T-cell (primary cell): ENCODE measurements at regions of chr13 and their contacts with region 1.

Region 1: GRCh38 chr13:78137404-78138142 is 218.9 kb upstream of the EDNRB start:
- DNase-seq: peak in 5 of 35 experiments; percentile 0 to 57 (median 7)
- ATAC-seq: peak; percentile 54 to 66 (median 62)
- H3K4me3 ChIP-seq: peak overlapping the region in 1 of 2 donors; percentile 21
- H3K4me3 Mint-ChIP-seq: peak overlapping the region; percentile 2 to 37 (median 25)
- H3K27ac ChIP-seq: no peak overlapping the region
- H3K27ac Mint-ChIP-seq: no peak overlapping the region
- H3K4me1 ChIP-seq: peaks cover 0 to 6% of the 10 kb centered on the region in 2 experiments
- H3K4me1 Mint-ChIP-seq: peaks cover 5 to 7% (median 6%) of the 10 kb centered on the region in 3 donors
- H3K27me3 ChIP-seq: no peaks in the 10 kb centered on the region
- H3K27me3 Mint-ChIP-seq: peaks cover 0 to 5% of the 10 kb centered on the region in 2 donors

Region 2: DNA sequence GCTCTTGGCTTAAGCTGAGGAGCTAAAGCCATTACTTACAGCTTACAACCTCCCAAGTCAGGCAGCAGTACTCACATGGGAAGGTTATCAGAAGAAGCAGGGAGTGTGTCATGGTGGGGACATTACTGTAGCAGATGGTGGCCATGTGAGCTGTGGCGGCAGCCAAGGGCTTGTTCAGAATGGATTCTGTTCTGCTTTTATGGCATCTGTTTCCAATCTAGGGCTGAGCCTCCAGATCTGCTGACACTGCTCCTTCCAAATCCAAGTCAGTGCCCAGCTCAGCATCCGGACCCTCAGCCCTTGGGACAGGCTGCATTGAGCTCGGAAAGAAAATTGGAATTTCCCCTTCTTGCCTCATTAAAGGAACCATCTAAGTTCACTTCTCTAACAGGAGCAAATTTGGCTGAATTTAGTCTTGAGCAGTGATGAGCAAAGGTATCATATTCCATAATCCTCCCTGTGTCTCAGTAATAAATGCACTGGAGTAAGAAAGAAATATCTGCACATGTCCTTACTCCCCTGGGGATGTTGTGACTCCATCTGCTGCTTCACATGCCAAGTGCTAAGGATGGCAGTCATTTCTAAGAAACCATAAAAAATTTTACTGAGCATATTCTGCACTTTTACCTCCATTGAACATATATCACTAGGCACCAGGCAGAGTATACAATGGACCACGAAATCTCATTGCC is 1325.2 kb before region 1 on chr13:
- CTCF ChIA-PET with region 1: no interaction called
- POLR2A ChIA-PET with region 1: no interaction called
- DNase-seq: no peak
- ATAC-seq: no peak
- H3K4me3 ChIP-seq: no peak overlapping the region
- H3K4me3 Mint-ChIP-seq: no peak overlapping the region
- H3K27ac ChIP-seq: no peak overlapping the region
- H3K27ac Mint-ChIP-seq: no peak overlapping the region
- H3K4me1 ChIP-seq: no peaks in the 10 kb centered on the region
- H3K4me1 Mint-ChIP-seq: no peaks in the 10 kb centered on the region
- H3K27me3 ChIP-seq: peaks cover 0 to 20% of the 10 kb centered on the region in 2 experiments
- H3K27me3 Mint-ChIP-seq: peaks cover 16 to 21% of the 10 kb centered on the region in 2 donors

Region 3: GRCh38 chr13:77779552-77780272 is 357.9 kb before region 1 on chr13:
- CTCF ChIA-PET with region 1: no interaction called
- POLR2A ChIA-PET with region 1: no interaction called
- DNase-seq: peak in 12 of 35 experiments; percentile 1 to 64 (median 10)
- ATAC-seq: peak; percentile 49 to 81 (median 58)
- H3K4me3 ChIP-seq: no peak overlapping the region
- H3K4me3 Mint-ChIP-seq: no peak overlapping the region
- H3K27ac ChIP-seq: no peak overlapping the region
- H3K27ac Mint-ChIP-seq: no peak overlapping the region
- H3K4me1 ChIP-seq: peaks cover 0 to 3% of the 10 kb centered on the region in 2 experiments
- H3K4me1 Mint-ChIP-seq: peaks cover 8 to 12% (median 10%) of the 10 kb centered on the region in 3 donors
- H3K27me3 ChIP-seq: no peaks in the 10 kb centered on the region
- H3K27me3 Mint-ChIP-seq: no peaks in the 10 kb centered on the region

Region 4: GRCh38 chr13:78194904-78195639 is 57.5 kb after region 1 on chr13:
- CTCF ChIA-PET with region 1: no interaction called
- POLR2A ChIA-PET with region 1: no interaction called
- DNase-seq: no peak
- ATAC-seq: no peak
- H3K4me3 ChIP-seq: no peak overlapping the region
- H3K4me3 Mint-ChIP-seq: no peak overlapping the region
- H3K27ac ChIP-seq: no peak overlapping the region
- H3K27ac Mint-ChIP-seq: no peak overlapping the region
- H3K4me1 ChIP-seq: no peaks in the 10 kb centered on the region
- H3K4me1 Mint-ChIP-seq: no peaks in the 10 kb centered on the region
- H3K27me3 ChIP-seq: no peaks in the 10 kb centered on the region
- H3K27me3 Mint-ChIP-seq: peaks cover 0 to 21% of the 10 kb centered on the region in 2 donors

Region 5: DNA sequence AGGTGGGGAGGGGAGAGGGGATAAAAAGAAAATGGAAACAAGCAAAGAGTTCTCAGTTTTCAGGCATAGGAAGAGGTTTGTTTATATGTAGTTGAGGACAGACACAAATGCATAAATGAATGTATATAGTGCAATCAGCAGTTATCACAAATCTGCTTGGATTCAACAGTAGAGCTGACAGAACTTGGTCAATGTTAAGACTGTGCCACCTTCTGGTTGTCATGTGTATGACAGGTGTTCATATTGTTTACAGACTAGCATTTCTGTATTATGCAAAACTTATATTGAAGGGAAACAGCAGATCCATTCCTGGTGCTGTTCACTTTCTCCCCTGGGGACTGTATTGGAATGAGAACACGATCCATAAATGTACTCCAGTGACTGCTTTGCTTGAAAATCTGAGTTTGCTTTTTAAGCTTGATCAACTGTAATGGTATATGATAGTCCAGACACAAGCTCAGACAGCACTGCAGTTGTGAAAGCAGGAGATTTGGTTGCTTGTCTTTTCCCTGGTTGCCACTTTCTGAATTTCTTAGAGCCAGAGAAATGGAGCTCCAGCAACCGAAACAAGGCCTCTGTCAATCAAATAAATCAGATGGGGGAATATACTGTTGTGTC is 840.9 kb after region 1 on chr13:
- CTCF ChIA-PET with region 1: interaction called, 16 to 46 read pairs
- POLR2A ChIA-PET with region 1: no interaction called
- DNase-seq: peak in 19 of 35 experiments; percentile 1 to 63 (median 11)
- ATAC-seq: peak in 3 of 4 experiments; percentile 61 to 67 (median 65)
- H3K4me3 ChIP-seq: no peak overlapping the region
- H3K4me3 Mint-ChIP-seq: no peak overlapping the region
- H3K27ac ChIP-seq: no peak overlapping the region
- H3K27ac Mint-ChIP-seq: no peak overlapping the region
- H3K4me1 ChIP-seq: no peaks in the 10 kb centered on the region
- H3K4me1 Mint-ChIP-seq: no peaks in the 10 kb centered on the region
- H3K27me3 ChIP-seq: no peaks in the 10 kb centered on the region
- H3K27me3 Mint-ChIP-seq: peaks cover 15 to 18% of the 10 kb centered on the region in 2 donors